Tibial artery (tissue), 4 donors: ENCODE measurements at regions of chr1 and their contacts with region 1.

Region 1: DNA sequence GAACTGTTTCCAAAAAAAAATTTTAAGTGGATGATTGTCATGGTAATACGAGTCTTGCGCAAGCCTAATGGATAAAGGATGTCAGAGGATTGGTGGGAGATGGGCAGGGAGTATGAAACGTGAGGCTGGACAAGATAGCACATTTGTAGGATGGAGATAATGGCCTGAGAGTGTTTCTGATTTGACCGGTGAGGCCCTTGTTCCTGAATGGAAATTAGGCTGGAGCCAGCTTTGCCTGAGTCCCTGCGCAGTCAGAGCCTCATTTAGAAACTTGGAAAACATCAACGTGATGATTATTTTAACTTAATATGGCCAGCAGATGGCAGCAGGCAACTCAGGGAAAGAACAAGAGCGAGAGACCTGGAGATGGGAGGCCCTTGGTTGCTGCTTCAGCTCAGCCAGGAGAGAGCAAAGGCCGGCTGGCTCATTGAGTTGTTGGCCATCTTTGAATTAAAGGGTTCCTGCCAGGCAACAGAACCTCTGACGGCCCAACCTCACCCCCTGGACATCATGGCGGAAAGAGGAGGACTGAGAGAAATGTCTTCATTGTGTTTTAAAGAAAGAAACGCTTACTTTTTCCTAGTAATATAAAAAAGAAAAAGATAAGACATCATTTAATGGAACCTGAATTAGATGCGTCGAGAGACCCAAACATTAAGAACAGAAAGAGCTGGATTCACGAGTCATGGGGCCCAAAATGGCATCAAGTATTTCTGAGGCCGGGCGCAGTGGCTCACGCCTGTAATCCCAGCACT is 80.3 kb downstream of the SELENOF start:
- DNase-seq: peak; percentile 75 to 78
- H3K4me3 ChIP-seq: no peak overlapping the region
- H3K27ac ChIP-seq: no peak overlapping the region
- H3K4me1 ChIP-seq: peaks cover 0 to 6% (median 0%) of the 10 kb centered on the region in 4 donors
- H3K27me3 ChIP-seq: no peaks in the 10 kb centered on the region
- CTCF ChIP-seq: peak; percentile 43 to 67

Region 2: DNA sequence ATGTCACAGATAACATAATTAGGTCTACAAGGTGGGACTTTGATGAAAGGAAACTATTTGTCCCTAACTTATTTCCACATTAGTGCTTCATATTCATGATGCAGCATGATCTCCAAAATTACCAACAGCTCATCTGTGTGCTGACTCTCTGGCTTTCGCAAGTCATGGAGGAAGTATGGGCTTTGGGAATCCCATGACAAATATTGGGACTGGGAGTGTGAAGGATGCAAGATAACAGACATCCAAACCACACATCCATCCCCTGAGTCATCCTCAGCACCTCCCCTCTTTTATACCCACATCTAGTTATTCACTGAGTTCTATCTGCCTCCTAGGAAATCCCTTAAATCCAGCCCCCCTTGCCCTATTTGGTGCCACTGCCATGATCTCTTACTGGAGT is 574.2 kb before region 1 on chr1:
- intact Hi-C with region 1: no loop called
- DNase-seq: no peak
- H3K4me3 ChIP-seq: no peak overlapping the region
- H3K27ac ChIP-seq: no peak overlapping the region
- H3K4me1 ChIP-seq: no peaks in the 10 kb centered on the region
- H3K27me3 ChIP-seq: no peaks in the 10 kb centered on the region
- CTCF ChIP-seq: no peak

Region 3: GRCh38 chr1:86429835-86430234 is 403.8 kb before region 1 on chr1:
- intact Hi-C with region 1: no loop called
- DNase-seq: peak; percentile 77 to 79
- H3K4me3 ChIP-seq: no peak overlapping the region
- H3K27ac ChIP-seq: peak overlapping the region; percentile 47 to 56
- H3K4me1 ChIP-seq: peaks cover 0 to 13% (median 2%) of the 10 kb centered on the region in 4 donors
- H3K27me3 ChIP-seq: no peaks in the 10 kb centered on the region
- CTCF ChIP-seq: no peak

Region 4: DNA sequence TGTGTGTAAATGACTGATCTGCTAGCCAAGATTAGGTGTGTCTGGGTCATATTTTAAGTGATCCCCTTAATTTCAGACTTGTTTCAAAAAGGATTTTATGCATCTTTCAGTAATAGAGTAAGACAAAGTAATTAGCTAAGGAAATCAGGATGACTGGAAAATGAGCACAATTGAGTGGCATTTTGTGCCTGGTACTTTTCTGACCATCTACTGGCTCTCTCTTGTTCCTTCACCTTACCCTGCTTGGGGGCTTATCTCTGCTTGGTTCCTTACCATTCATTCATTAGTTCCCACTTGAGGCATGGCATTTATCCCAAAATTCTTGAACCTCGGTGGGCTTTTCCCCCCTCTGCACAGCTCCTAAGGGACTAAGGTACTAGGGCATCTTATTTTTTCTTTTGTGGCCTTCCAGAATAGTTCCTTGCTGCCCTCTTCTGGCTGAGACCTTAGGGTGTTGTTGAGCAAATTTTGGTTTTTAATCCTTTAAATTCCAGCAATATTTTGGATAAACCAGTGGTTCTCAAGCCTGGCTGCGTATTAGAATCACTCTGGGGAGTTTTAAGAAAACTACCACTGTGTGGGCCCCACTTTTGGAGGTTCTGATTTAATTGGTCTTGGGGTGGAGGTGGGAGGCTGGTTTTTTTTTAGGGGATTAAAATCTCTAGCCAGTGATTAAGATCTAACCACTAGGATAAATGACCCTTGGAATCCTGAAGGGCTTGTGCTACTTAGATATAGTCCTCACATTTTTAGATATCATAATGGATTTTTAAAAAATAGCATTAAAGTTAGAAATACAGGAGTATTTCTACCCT is 131.6 kb after region 1 on chr1:
- intact Hi-C with region 1: loop called (anchors 5 kb)
- DNase-seq: no peak
- H3K4me3 ChIP-seq: no peak overlapping the region
- H3K27ac ChIP-seq: no peak overlapping the region
- H3K4me1 ChIP-seq: peaks cover 0 to 5% (median 0%) of the 10 kb centered on the region in 4 donors
- H3K27me3 ChIP-seq: no peaks in the 10 kb centered on the region
- CTCF ChIP-seq: peak; percentile 55 to 63

Region 5: DNA sequence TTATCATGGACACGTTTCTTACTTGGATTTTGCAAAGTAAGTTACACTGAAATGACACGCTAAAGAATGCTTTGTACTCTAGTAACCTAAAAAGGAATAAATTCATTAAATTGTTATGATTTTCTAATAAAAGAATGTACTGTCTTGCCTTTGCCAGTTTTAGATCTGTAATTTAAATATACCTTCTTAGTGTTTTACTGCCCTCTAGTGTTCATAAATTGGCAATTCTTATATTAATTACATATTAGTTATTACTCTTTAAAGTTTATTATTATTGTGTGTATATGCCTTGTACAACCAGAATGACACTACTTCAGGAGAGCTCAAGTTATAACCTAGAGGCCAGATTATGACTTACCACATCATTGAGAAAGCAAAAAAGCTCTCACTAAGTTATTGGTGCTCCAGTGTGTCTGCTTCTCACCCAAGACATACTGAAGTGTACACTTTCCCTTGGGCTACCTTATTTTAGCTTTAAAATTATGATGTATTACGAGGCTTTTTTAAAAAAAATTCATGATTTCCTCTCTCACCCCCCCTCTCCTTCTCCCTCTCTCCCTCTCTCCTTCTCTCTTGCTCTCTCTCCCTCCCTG is 250.7 kb after region 1 on chr1:
- intact Hi-C with region 1: loop called (anchors 2 kb)
- DNase-seq: no peak
- H3K4me3 ChIP-seq: no peak overlapping the region
- H3K27ac ChIP-seq: no peak overlapping the region
- H3K4me1 ChIP-seq: no peaks in the 10 kb centered on the region
- H3K27me3 ChIP-seq: no peaks in the 10 kb centered on the region
- CTCF ChIP-seq: peak; percentile 36 to 67